Lower leg skin (tissue), 4 donors: ENCODE measurements at regions of chrX and their contacts with region 1.

Region 1: GRCh38 chrX:136920001-136920400 is 39.5 kb upstream of the RBMX start:
- DNase-seq: no peak
- H3K4me3 ChIP-seq: no peak overlapping the region
- CTCF ChIP-seq: no peak
- POLR2A ChIP-seq: no peak

Region 2: DNA sequence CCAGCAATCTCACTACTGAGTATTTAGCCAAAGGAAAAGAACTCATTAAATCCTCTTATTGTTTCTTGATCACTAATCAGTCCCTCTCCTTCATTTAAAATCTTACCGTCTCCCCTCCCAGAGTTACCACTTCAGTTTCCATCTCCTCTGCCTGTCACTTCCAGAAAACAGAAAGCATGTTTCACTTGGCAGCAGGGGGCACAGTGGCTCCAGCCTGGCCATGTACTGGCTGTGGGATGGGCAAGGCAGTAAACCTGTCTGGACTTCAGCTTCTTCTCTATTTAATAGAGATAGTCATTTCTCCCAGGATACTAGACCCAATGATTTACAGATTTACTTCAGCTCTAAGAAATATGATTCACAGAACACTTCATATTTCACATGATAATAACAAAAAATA is 208.9 kb before region 1 on chrX:
- intact Hi-C with region 1: loop called (anchors 10 kb)
- DNase-seq: no peak
- H3K4me3 ChIP-seq: no peak overlapping the region
- CTCF ChIP-seq: no peak
- POLR2A ChIP-seq: no peak